Uterus (tissue), 4 donors: ENCODE measurements at regions of chr11 and their contacts with region 1.

Region 1: GRCh38 chr11:77127232-77127911 is 674 bp upstream of the MYO7A start:
- DNase-seq: peak; percentile 33 to 67
- H3K4me3 ChIP-seq: peak overlapping the region; percentile 0 to 34
- H3K27ac ChIP-seq: no peak overlapping the region
- H3K4me1 ChIP-seq: peaks cover 0 to 5% of the 10 kb centered on the region in 2 donors
- H3K27me3 ChIP-seq: no peaks in the 10 kb centered on the region
- CTCF ChIP-seq: peak; percentile 95 to 97 (median 96)
- POLR2A ChIP-seq: no peak

Region 2: DNA sequence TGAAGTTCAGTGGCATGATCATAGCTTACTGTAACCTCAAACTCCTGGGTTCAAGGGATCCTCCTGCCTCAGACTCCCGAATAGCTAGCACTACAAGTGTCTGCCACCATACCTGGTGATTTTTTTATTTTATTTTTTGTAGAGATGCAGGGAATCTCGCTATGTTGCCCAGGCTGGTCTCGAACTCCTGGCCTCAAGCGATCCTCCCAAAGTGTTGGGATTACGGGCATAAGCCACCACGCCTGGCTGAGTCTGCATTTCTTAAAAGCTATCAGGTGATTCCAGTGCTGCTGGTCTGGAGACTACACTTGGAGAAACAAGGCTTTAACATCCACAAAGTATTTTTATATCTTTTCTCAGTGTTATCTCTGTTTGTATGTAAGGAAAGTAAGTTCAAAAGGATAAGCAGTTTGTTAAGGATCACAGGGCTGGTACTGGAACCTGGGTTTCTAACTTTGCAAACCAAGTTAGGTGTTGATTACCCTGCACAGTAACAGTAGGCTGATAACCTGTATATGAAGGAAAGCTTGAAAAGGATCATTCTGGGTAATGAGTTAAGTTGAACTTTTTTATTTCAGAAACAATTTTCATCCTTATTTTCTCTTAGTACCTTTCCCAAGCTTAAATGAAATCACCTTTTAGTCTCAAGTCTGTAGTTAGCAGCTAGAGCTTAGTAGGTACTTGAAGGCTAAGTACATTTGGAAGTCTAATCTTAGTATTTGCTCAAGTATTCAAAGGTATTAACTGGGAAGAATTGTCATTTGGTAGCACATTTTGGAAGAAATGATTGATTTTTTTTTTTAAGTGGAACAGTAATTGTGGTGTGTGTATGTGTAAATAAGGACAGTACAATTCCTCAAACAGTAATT is 254.2 kb before region 1 on chr11:
- intact Hi-C with region 1: no loop called
- DNase-seq: no peak
- H3K4me3 ChIP-seq: no peak overlapping the region
- H3K27ac ChIP-seq: no peak overlapping the region
- H3K4me1 ChIP-seq: no peaks in the 10 kb centered on the region
- H3K27me3 ChIP-seq: no peaks in the 10 kb centered on the region
- CTCF ChIP-seq: no peak
- POLR2A ChIP-seq: no peak

Region 3: DNA sequence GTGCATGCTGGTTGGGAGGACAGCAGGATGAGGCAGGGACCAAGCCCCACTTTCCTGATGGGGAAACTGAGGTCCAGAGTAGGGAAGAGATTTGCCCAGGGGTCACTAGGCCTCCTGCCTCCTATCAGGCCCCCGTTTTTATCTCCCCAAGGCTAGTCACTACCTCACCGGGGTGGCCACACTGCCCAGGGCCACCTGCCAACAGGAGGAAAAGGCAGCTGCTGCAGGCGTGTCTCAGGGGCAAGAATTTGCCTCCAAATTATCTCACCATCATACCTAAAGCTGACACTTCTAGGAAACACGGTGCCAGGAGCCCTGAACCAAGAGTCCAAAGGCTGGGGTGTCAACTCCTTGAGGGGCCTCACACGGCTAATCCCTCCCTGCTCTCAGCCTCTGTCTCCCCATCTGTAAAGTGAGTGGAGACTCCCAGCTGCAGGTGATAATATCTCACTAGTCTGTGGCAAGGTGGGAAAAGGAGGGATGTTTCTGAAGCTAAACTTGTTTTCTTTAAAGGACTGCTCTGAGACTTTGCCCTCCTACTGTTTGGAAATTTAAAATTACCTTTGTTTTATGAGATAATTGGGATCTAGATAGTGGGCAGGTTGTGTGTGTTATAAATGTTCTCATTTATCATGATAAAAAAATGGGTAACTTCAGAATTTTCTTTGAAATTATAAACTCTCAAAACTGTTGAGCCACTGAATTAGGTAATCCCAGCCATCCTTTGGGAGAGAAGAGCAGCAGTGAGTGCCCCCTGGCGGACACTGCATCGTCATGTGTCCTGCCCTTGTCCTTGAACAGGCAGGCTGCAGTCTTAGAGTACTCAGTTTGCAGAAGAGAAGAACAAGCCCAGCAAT is 60.6 kb after region 1 on chr11:
- intact Hi-C with region 1: loop called (anchors 10 kb)
- DNase-seq: peak; percentile 68 to 77
- H3K4me3 ChIP-seq: no peak overlapping the region
- H3K27ac ChIP-seq: no peak overlapping the region
- H3K4me1 ChIP-seq: no peaks in the 10 kb centered on the region
- H3K27me3 ChIP-seq: no peaks in the 10 kb centered on the region
- CTCF ChIP-seq: peak; percentile 70 to 82 (median 79)
- POLR2A ChIP-seq: no peak